ENCODE measurements at regions of chr5 and their contacts with region 1.

Region 1: GRCh38 chr5:81105261-81105877 is 127.8 kb upstream of the CKMT2 start:
- DNase-seq: no peak
- ATAC-seq: no peak
- H3K4me3 ChIP-seq: no peak overlapping the region
- H3K27ac ChIP-seq: no peak overlapping the region
- H3K4me1 ChIP-seq: no peaks in the 10 kb centered on the region
- CTCF ChIP-seq: no peak
- EP300 ChIP-seq: no peak
- POLR2A ChIP-seq: no peak
- RAD21 ChIP-seq: no peak

Region 2: GRCh38 chr5:80711938-80712337 is 393.4 kb before region 1 on chr5:
- CTCF ChIA-PET with region 1: interaction called, 10 read pairs
- POLR2A ChIA-PET with region 1: no interaction called
- DNase-seq: peak; percentile 31 to 54
- ATAC-seq: peak; percentile 96 to 97
- H3K4me3 ChIP-seq: no peak overlapping the region
- H3K27ac ChIP-seq: no peak overlapping the region
- H3K4me1 ChIP-seq: 0 out of 3 replicates have a peak, but pooled peaks cover 4% of the 10 kb centered on the region
- CTCF ChIP-seq: peak; percentile 55
- EP300 ChIP-seq: no peak
- POLR2A ChIP-seq: no peak
- RAD21 ChIP-seq: peak; percentile 70 to 74

Region 3: DNA sequence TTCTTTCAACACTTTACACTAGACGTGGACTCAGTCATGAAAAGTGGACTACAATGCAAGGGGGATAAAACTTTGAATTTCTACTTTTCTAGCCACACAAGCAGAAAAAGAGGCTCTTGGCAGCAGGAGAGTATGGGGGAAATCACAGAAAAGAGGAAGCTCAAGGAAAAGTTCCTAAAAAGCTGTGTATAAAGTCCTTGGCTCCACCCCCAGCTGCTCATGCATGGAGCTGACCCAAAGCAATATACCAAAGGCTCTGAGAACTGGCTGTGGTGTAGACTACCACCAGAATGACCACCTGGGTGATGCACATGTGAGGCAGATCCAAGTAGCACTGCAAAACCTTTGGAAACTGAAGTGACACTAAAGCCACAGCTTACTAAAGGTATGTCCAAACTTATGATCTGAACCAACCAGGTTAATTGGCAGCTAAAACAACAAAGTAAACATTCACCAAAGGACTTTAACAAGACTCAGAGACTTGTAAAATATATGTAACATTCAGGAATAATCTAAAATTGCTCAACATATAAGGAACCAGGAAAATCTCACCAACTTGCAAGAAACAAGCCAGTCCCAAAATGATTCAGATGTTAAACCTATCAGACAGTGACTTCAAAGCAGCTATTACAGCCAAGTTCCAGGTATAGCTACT is 200.7 kb before region 1 on chr5:
- CTCF ChIA-PET with region 1: no interaction called
- POLR2A ChIA-PET with region 1: no interaction called
- DNase-seq: no peak
- ATAC-seq: no peak
- H3K4me3 ChIP-seq: no peak overlapping the region
- H3K27ac ChIP-seq: no peak overlapping the region
- H3K4me1 ChIP-seq: no peaks in the 10 kb centered on the region
- CTCF ChIP-seq: no peak
- EP300 ChIP-seq: no peak
- POLR2A ChIP-seq: no peak
- RAD21 ChIP-seq: no peak

Region 4: DNA sequence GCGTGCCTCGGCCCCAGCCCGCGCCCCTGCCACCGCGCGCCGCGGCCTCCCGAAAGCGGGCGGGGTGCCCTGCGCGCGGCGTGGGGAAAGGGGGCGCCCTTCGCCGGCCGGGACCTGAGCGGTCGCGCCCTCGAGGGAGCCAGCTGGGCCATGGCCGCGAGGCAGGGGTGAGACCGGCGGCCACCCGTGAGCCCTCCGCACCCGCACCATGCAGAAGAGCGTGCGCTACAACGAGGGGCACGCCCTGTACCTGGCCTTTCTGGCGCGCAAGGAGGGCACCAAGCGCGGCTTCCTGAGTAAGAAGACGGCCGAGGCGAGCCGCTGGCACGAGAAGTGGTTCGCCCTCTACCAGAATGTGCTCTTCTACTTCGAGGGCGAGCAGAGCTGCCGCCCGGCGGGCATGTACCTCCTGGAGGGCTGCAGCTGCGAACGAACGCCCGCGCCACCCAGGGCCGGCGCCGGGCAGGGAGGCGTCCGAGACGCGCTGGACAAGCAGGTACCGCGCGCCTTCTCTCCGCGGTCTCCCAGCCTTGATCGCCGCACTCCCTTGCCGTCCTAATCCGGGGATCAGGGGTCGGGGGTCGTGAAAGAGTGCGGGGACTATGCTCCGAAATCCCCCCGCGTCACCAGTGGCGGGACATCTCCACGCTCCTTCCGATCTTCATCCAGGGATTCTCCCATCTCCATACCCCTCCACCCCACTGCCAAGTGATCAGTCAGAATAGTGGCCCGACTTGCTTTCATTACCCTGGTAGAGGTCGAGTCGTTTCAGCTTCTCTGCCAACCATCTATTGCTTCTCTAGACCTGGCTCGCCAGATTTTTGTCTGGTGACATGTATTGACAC is 144.6 kb before region 1 on chr5:
- CTCF ChIA-PET with region 1: interaction called, 22 read pairs
- POLR2A ChIA-PET with region 1: no interaction called
- DNase-seq: peak; percentile 31 to 47
- ATAC-seq: peak; percentile 78 to 81
- H3K4me3 ChIP-seq: peak overlapping the region; percentile 54
- H3K27ac ChIP-seq: peak overlapping the region; percentile 58 to 87; a peak in 5 of 6 replicates
- H3K4me1 ChIP-seq: peaks cover 21% of the 10 kb centered on the region; the same call in 2 of the 3 replicates
- CTCF ChIP-seq: peak; percentile 57
- EP300 ChIP-seq: no peak
- POLR2A ChIP-seq: no peak
- RAD21 ChIP-seq: peak in 1 of 2 experiments; percentile 49; a peak in 3 of 5 replicates

Region 5: DNA sequence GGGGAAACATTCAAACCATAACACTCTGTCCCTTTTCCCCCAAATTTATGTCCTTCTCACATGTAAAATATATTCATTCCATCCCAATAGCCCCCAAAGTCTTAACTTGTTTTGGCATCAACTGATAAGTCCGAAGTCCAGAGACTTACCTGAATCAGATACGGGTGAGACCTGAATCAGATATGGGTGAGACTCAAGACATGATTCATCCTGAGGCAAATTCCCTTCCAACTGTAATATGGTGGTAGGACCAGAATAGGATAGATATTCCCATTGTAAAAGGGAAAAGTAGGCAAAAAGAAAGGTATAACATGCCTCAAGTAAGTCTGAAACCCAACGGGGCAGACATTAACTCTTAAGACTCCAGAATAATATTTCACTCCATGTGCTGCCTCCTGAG is 12.2 kb after region 1 on chr5:
- CTCF ChIA-PET with region 1: interaction called, 15 read pairs
- POLR2A ChIA-PET with region 1: no interaction called
- DNase-seq: no peak
- ATAC-seq: no peak
- H3K4me3 ChIP-seq: no peak overlapping the region
- H3K27ac ChIP-seq: no peak overlapping the region
- H3K4me1 ChIP-seq: no peaks in the 10 kb centered on the region
- CTCF ChIP-seq: no peak
- EP300 ChIP-seq: no peak
- POLR2A ChIP-seq: no peak
- RAD21 ChIP-seq: no peak